ENCODE measurements at regions of chr12 and their contacts with region 1.

Region 1: GRCh38 chr12:91361864-91362263 is 179.2 kb upstream of the DCN start:
- DNase-seq: no peak
- ATAC-seq: peak; percentile 60
- H3K4me3 Mint-ChIP-seq: no peak overlapping the region
- H3K27ac Mint-ChIP-seq: no peak overlapping the region
- H3K4me1 Mint-ChIP-seq: no peaks in the 10 kb centered on the region
- H3K27me3 Mint-ChIP-seq: no peaks in the 10 kb centered on the region
- CTCF ChIP-seq: peak; percentile 63

Region 2: DNA sequence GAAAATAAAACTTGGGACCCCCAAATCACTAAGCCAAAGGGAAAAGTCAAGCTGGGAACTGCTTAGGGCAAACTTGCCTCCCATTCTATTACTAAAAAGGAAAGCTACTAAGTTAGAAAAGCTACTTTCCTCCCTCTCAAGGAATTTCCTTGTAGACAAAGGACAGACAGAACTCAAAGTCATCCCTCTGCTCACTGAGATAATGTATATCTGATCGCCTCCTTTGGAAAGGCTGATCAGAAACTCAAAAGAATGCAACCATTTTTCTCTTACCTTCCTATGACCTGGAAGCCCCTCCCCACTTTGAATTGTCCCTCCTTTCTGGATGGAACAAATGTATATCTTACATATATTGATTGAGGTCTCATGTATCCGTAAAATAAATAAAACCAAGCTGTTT is 11.2 kb after region 1 on chr12:
- CTCF ChIA-PET with region 1: interaction called, 10 read pairs
- POLR2A ChIA-PET with region 1: no interaction called
- intact Hi-C with region 1: no loop called
- DNase-seq: no peak
- ATAC-seq: no peak
- H3K4me3 Mint-ChIP-seq: no peak overlapping the region
- H3K27ac Mint-ChIP-seq: no peak overlapping the region
- H3K4me1 Mint-ChIP-seq: no peaks in the 10 kb centered on the region
- H3K27me3 Mint-ChIP-seq: peaks cover 2% of the 10 kb centered on the region
- CTCF ChIP-seq: no peak

Region 3: GRCh38 chr12:91396293-91396692 is 34.4 kb after region 1 on chr12:
- CTCF ChIA-PET with region 1: no interaction called
- POLR2A ChIA-PET with region 1: no interaction called
- intact Hi-C with region 1: no loop called
- DNase-seq: no peak
- ATAC-seq: no peak
- H3K4me3 Mint-ChIP-seq: no peak overlapping the region
- H3K27ac Mint-ChIP-seq: no peak overlapping the region
- H3K4me1 Mint-ChIP-seq: no peaks in the 10 kb centered on the region
- H3K27me3 Mint-ChIP-seq: no peaks in the 10 kb centered on the region
- CTCF ChIP-seq: no peak

Region 4: GRCh38 chr12:92649511-92650227 is 1287.8 kb after region 1 on chr12:
- CTCF ChIA-PET with region 1: interaction called, 3 read pairs
- POLR2A ChIA-PET with region 1: no interaction called
- intact Hi-C with region 1: loop called (anchors 10 kb)
- DNase-seq: peak; percentile 71
- ATAC-seq: peak; percentile 81
- H3K4me3 Mint-ChIP-seq: no peak overlapping the region
- H3K27ac Mint-ChIP-seq: no peak overlapping the region
- H3K4me1 Mint-ChIP-seq: peaks cover 8% of the 10 kb centered on the region
- H3K27me3 Mint-ChIP-seq: no peaks in the 10 kb centered on the region
- CTCF ChIP-seq: peak; percentile 66